Psoas muscle (tissue), 8 donors: ENCODE measurements at regions of chr2 and their contacts with region 1.

Region 1: GRCh38 chr2:46632349-46632748 is 153.0 kb downstream of the TMEM247 start:
- DNase-seq: no peak
- ATAC-seq: peak; percentile 48 to 81 (median 61)
- H3K4me3 ChIP-seq: no peak overlapping the region
- H3K27ac ChIP-seq: no peak overlapping the region
- H3K4me1 ChIP-seq: no peaks in the 10 kb centered on the region
- H3K27me3 ChIP-seq: no peaks in the 10 kb centered on the region
- CTCF ChIP-seq: peak; percentile 63

Region 2: GRCh38 chr2:46776687-46777327 is 144.5 kb after region 1 on chr2:
- intact Hi-C with region 1: loop called in 1 of 2 experiments (anchors 5 kb)
- DNase-seq: no peak
- ATAC-seq: peak in 2 of 4 donors; percentile 47 to 59
- H3K4me3 ChIP-seq: no peak overlapping the region
- H3K27ac ChIP-seq: no peak overlapping the region
- H3K4me1 ChIP-seq: peaks cover 28% of the 10 kb centered on the region
- H3K27me3 ChIP-seq: no peaks in the 10 kb centered on the region
- CTCF ChIP-seq: peak; percentile 58

Region 3: GRCh38 chr2:46887028-46887885 is 254.9 kb after region 1 on chr2:
- intact Hi-C with region 1: loop called (anchors 1 to 2 kb)
- DNase-seq: no peak
- ATAC-seq: no peak
- H3K4me3 ChIP-seq: no peak overlapping the region
- H3K27ac ChIP-seq: no peak overlapping the region
- H3K4me1 ChIP-seq: peaks cover 4% of the 10 kb centered on the region
- H3K27me3 ChIP-seq: no peaks in the 10 kb centered on the region
- CTCF ChIP-seq: no peak